ENCODE measurements at regions of chr4 and their contacts with region 1.

Region 1: DNA sequence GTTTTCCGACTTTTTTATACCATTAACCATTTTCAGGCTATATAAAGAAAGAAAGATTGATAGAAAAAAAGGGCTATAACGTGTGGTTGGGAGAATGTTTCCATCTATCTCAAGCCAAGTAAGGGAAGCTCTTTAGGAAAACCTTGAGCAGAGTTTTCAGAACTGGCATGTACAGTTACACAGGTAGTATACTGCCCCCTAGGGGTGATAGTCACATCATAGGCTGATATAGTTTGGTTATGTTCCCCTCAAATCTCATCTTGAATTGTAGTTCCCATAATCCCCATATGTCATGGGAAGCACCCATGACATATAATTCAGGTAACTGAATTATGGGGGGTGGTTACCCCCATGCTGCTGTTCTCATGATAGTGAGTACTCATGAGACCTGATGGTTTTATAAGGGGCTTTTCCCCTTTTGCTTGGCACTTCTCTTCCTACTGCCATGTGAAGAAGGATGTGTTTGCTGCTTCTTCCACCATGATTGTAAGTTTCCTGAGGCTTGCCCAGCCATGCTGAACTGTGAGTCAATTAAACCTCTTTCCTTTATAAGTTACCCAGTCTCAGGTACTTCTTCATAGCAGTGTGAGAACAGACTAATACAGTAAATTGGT is 186.8 kb downstream of the TMA16 start:
- DNase-seq: peak in 1 of 2 experiments; percentile 52
- H3K4me3 ChIP-seq: no peak overlapping the region
- H3K4me3 Mint-ChIP-seq: no peak overlapping the region
- H3K27ac Mint-ChIP-seq: no peak overlapping the region
- H3K4me1 ChIP-seq: no peaks in the 10 kb centered on the region
- H3K4me1 Mint-ChIP-seq: no peaks in the 10 kb centered on the region
- H3K27me3 ChIP-seq: no peaks in the 10 kb centered on the region
- H3K27me3 Mint-ChIP-seq: peaks cover 3% of the 10 kb centered on the region
- CTCF ChIP-seq: peak; percentile 55 to 61

Region 2: GRCh38 chr4:163484906-163485305 is 196.4 kb before region 1 on chr4:
- CTCF ChIA-PET with region 1: no interaction called
- POLR2A ChIA-PET with region 1: no interaction called
- intact Hi-C with region 1: loop called (anchors 2 kb)
- DNase-seq: peak; percentile 59 to 60
- H3K4me3 ChIP-seq: no peak overlapping the region
- H3K4me3 Mint-ChIP-seq: no peak overlapping the region
- H3K27ac Mint-ChIP-seq: no peak overlapping the region
- H3K4me1 ChIP-seq: no peaks in the 10 kb centered on the region
- H3K4me1 Mint-ChIP-seq: no peaks in the 10 kb centered on the region
- H3K27me3 ChIP-seq: no peaks in the 10 kb centered on the region
- H3K27me3 Mint-ChIP-seq: peaks cover 4% of the 10 kb centered on the region
- CTCF ChIP-seq: peak; percentile 58 to 63

Region 3: GRCh38 chr4:163755013-163755412 is 73.7 kb after region 1 on chr4:
- CTCF ChIA-PET with region 1: no interaction called
- POLR2A ChIA-PET with region 1: no interaction called
- intact Hi-C with region 1: loop called (anchors 1 kb)
- DNase-seq: no peak
- H3K4me3 ChIP-seq: no peak overlapping the region
- H3K4me3 Mint-ChIP-seq: no peak overlapping the region
- H3K27ac Mint-ChIP-seq: no peak overlapping the region
- H3K4me1 ChIP-seq: no peaks in the 10 kb centered on the region
- H3K4me1 Mint-ChIP-seq: no peaks in the 10 kb centered on the region
- H3K27me3 ChIP-seq: no peaks in the 10 kb centered on the region
- H3K27me3 Mint-ChIP-seq: no peaks in the 10 kb centered on the region
- CTCF ChIP-seq: peak in 1 of 2 experiments; percentile 27

Region 4: DNA sequence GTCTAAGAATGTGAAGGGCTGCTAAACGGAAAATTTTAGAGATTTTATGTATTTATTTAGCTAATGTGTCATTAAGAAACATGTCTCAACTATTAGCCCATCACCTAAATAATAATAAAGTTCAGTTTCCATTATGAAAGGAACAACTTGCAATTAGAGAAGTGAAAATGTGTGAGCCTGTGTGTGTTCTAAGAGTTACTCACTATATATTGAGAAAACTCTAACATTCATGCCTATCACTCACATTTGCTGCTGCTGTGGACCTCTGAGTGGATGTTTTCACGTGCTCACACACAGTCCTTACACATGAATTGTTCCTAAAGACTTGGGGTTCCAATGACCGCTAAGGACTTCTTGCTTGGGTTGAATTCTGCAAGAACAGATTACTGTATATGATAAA is 177.2 kb after region 1 on chr4:
- CTCF ChIA-PET with region 1: no interaction called
- POLR2A ChIA-PET with region 1: no interaction called
- intact Hi-C with region 1: no loop called
- DNase-seq: no peak
- H3K4me3 ChIP-seq: no peak overlapping the region
- H3K4me3 Mint-ChIP-seq: no peak overlapping the region
- H3K27ac Mint-ChIP-seq: no peak overlapping the region
- H3K4me1 ChIP-seq: no peaks in the 10 kb centered on the region
- H3K4me1 Mint-ChIP-seq: no peaks in the 10 kb centered on the region
- H3K27me3 ChIP-seq: no peaks in the 10 kb centered on the region
- H3K27me3 Mint-ChIP-seq: peaks cover 7% of the 10 kb centered on the region
- CTCF ChIP-seq: no peak

Region 5: GRCh38 chr4:164012396-164013027 is 331.2 kb after region 1 on chr4:
- CTCF ChIA-PET with region 1: no interaction called
- POLR2A ChIA-PET with region 1: no interaction called
- intact Hi-C with region 1: loop called (anchors 1 kb)
- DNase-seq: peak; percentile 40 to 57
- H3K4me3 ChIP-seq: no peak overlapping the region
- H3K4me3 Mint-ChIP-seq: no peak overlapping the region
- H3K27ac Mint-ChIP-seq: no peak overlapping the region
- H3K4me1 ChIP-seq: no peaks in the 10 kb centered on the region
- H3K4me1 Mint-ChIP-seq: no peaks in the 10 kb centered on the region
- H3K27me3 ChIP-seq: no peaks in the 10 kb centered on the region
- H3K27me3 Mint-ChIP-seq: no peaks in the 10 kb centered on the region
- CTCF ChIP-seq: peak; percentile 56 to 77

Region 6: GRCh38 chr4:164731827-164732474 is 1050.6 kb after region 1 on chr4:
- CTCF ChIA-PET with region 1: no interaction called
- POLR2A ChIA-PET with region 1: no interaction called
- intact Hi-C with region 1: loop called (anchors 2 kb)
- DNase-seq: peak; percentile 37 to 63
- H3K4me3 ChIP-seq: no peak overlapping the region
- H3K4me3 Mint-ChIP-seq: no peak overlapping the region
- H3K27ac Mint-ChIP-seq: no peak overlapping the region
- H3K4me1 ChIP-seq: no peaks in the 10 kb centered on the region
- H3K4me1 Mint-ChIP-seq: no peaks in the 10 kb centered on the region
- H3K27me3 ChIP-seq: no peaks in the 10 kb centered on the region
- H3K27me3 Mint-ChIP-seq: peaks cover 3% of the 10 kb centered on the region
- CTCF ChIP-seq: peak; percentile 78 to 84